ENCODE measurements at regions of chr2 and their contacts with region 1.

Region 1: DNA sequence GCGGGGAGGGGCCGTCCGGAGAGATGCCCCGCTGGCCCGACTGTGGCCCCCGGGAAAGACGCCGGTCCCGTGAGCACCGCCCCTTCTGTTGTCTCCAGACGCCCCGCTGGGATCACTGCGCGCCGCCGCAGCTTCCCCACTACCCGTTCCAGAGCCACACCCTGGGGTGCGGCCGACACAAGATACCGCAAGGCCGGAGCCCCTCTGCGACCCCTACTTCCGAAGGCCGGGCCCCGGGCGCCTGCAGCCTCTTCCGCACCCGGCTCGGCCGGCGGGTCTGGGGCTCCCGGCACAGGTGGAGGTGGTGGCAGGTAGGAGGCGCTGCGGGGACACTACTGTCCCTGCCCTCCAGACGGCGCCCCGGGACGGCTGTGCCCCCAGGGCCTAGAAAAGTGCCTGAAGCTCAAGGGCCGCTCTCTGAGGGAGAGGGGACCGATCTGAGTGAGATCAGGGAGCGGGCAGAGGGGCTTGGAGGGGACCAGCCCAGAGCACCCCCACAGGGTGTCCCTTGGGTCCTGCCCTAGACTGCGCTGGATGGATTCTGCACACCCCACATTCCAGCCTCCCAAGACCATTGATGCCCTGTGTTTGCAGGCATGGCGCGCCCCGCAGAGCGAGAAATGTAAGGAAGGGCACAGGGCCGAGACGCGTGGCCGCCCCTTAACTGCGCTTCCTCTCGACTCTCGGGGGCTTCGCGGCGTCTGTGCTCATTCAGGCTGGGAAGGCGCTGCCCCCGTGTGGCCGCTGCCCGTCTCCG is 80.0 kb downstream of the GFPT1 start:
- DNase-seq: peak; percentile 94
- CTCF ChIP-seq: peak; percentile 95

Region 2: GRCh38 chr2:68467077-68467960 is 839.7 kb before region 1 on chr2 and contains the starts of genes APLF and FBXO48:
- in situ Hi-C with region 1: no loop called
- DNase-seq: peak; percentile 97
- CTCF ChIP-seq: no peak

Region 3: GRCh38 chr2:69026026-69026425 is 281.0 kb before region 1 on chr2:
- in situ Hi-C with region 1: loop called (anchors 10 kb)
- DNase-seq: peak; percentile 53
- CTCF ChIP-seq: peak; percentile 55

Region 4: GRCh38 chr2:69073928-69074570 is 233.0 kb before region 1 on chr2:
- in situ Hi-C with region 1: no loop called
- DNase-seq: no peak
- CTCF ChIP-seq: no peak

Region 5: DNA sequence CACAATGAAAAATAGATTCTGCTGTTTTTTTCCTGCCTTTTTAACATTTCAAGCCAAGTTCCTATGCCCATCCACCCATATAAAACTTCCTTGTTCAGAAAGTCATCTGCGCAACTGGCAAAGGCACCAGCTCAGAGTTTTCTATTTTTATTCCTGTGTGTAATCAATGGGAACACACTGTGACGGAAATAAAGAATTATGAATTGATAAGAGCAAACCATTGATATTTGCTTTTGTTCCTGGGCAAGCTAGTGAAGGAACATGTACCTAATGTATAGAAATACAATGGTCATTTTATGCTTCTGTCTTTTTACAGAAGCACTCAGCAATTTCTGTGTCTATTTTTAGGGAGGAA is 367.3 kb after region 1 on chr2:
- in situ Hi-C with region 1: no loop called
- DNase-seq: no peak
- CTCF ChIP-seq: no peak

Measured in GM13976 (cell line).